RWPE1 (cell line): ENCODE measurements at regions of chr4 and their contacts with region 1.

Region 1: GRCh38 chr4:77235289-77235854 is 78.4 kb downstream of the CCNG2 start:
- DNase-seq: no peak
- H3K27ac ChIP-seq: no peak overlapping the region
- CTCF ChIP-seq: no peak

Region 2: DNA sequence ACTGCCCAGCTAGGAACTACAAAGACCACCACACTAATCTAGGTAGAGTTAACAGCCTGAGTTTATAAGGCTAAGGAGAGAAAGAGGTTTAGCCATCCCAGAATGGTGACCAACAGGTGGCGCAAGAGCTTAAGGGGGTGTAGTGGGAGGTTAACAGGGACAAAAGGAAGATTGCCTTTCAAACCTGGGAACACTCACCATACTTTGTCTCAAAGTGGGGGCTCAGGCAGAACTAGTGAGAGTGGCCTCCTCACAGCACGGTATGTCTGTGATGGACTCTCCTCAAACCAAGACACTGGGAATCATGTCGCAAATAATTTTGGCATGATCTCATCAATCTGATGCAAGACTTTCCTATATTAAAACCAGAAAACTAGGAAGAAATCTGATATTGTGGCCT is 183.0 kb before region 1 on chr4:
- CTCF ChIA-PET with region 1: interaction called, 4 read pairs
- POLR2A ChIA-PET with region 1: interaction called, 13 read pairs
- DNase-seq: peak; percentile 15
- H3K27ac ChIP-seq: no peak overlapping the region
- CTCF ChIP-seq: peak; percentile 29